ENCODE measurements at regions of chr11 and their contacts with region 1.

Region 1: DNA sequence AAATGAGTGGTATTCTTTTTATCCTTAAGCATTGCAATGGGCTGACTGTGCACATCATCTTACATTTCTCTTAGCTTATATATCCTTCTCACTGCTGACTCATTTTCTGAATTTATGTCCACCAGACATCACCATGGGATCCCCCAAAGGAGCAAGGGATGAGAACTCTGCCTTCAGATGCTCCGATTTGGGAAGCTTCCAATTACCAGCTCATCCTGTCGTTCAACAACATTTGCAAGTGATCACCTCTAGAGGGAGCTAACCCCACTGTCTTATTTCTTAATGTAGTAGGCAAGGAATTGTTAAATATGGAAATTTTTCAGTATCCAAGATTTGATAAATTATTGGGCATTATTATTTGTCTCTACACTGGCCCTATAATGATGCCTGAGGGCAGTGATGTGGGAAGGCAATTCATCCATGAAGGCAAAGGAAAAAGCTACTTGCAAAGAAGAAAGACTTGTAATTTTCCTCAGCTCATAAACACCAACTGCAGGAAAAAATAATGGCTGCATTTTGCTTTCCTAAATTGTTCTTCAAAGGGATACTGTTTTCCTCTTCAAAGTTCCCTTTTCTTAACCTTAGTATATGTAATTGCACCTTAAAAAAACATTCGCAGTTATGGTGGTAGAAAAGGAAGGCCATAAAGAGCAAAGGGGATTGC is 102.4 kb upstream of the FSHB start:
- DNase-seq: no peak
- ATAC-seq: peak; percentile 75
- H3K4me3 Mint-ChIP-seq: no peak overlapping the region
- H3K27ac Mint-ChIP-seq: no peak overlapping the region
- H3K4me1 Mint-ChIP-seq: no peaks in the 10 kb centered on the region
- H3K27me3 Mint-ChIP-seq: peaks cover 30% of the 10 kb centered on the region
- CTCF ChIP-seq: peak; percentile 56

Region 2: DNA sequence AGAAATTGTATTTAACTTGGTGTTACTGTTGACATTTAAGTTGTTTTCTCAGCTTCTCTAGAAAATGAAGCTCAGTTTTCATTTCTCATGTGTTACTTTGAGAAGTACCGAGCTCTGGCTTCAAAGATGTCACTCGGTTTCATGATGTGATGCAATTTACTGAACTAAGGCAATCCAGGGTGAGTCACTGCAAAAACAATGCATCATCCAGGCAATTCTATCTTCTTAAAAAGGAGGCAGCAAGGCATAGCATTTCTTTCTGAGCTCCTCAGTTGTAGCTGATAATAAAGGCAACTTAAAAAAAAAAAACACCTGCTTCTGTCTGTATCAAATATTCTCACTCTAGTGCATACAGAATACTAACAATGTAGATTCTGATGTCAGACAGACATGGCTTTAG is 20.5 kb before region 1 on chr11:
- CTCF ChIA-PET with region 1: interaction called, 13 read pairs
- POLR2A ChIA-PET with region 1: no interaction called
- DNase-seq: no peak
- ATAC-seq: no peak
- H3K4me3 Mint-ChIP-seq: no peak overlapping the region
- H3K27ac Mint-ChIP-seq: no peak overlapping the region
- H3K4me1 Mint-ChIP-seq: 0 out of 2 replicates have a peak, but pooled peaks cover 6% of the 10 kb centered on the region
- H3K27me3 Mint-ChIP-seq: peaks cover 75% of the 10 kb centered on the region
- CTCF ChIP-seq: no peak

Region 3: DNA sequence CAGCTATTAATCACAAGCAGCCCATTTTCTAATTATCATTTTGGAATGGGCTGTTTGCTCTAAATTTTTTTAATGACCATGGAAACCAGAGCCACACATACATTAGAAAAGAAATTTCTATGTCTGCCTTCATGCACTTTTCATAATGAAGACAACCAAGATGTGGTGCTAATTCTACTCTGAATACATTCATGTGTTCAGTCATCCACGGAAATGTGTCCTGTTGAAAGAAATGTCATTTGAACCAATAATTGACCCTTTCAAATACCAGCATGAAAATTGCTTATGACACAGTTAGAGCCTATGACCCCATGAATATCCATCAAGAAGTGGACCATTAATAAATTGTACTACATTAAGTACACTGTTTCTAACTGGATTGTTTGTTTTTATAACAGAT is 11.9 kb before region 1 on chr11:
- CTCF ChIA-PET with region 1: interaction called, 23 read pairs
- POLR2A ChIA-PET with region 1: no interaction called
- DNase-seq: no peak
- ATAC-seq: no peak
- H3K4me3 Mint-ChIP-seq: no peak overlapping the region
- H3K27ac Mint-ChIP-seq: no peak overlapping the region
- H3K4me1 Mint-ChIP-seq: 0 out of 2 replicates have a peak, but pooled peaks cover 6% of the 10 kb centered on the region
- H3K27me3 Mint-ChIP-seq: peaks cover 84% of the 10 kb centered on the region
- CTCF ChIP-seq: no peak

Region 4: DNA sequence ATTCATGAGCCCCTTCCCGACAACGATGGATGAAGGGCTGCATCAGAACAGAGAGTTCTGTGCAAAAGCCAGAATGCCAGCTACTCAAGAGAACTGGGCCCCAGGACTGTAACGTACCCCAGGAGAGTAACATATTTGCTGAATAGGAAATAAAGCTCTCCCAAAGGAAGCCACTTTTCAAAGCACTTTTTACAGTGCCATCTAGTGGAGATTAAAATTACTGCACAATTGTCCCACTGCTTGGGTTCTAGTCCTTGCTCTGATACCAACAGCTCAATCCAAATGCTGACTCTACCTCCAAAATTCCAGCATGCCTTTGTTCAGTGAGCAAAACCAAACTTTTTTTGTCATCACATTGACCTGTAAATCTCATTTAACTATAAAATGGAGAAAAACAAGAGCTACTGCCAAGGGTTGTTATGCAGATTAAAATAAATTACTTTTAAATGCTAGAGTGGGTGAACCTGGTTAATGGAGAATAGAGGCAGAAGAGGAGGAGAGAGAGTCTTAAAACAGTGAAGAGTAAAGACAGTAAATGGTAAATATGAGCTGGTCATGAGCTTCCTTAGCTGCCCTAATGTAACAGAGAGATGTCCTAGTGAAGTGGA is 14.8 kb after region 1 on chr11:
- CTCF ChIA-PET with region 1: interaction called, 116 read pairs
- POLR2A ChIA-PET with region 1: interaction called, 3 read pairs
- DNase-seq: no peak
- ATAC-seq: peak; percentile 93
- H3K4me3 Mint-ChIP-seq: no peak overlapping the region
- H3K27ac Mint-ChIP-seq: no peak overlapping the region
- H3K4me1 Mint-ChIP-seq: no peaks in the 10 kb centered on the region
- H3K27me3 Mint-ChIP-seq: peaks cover 30% of the 10 kb centered on the region
- CTCF ChIP-seq: peak; percentile 58

Region 5: GRCh38 chr11:30150425-30150824 is 22.0 kb after region 1 on chr11:
- CTCF ChIA-PET with region 1: interaction called, 116 read pairs
- POLR2A ChIA-PET with region 1: no interaction called
- DNase-seq: no peak
- ATAC-seq: peak; percentile 32; the same call in 1 of the 2 replicates
- H3K4me3 Mint-ChIP-seq: no peak overlapping the region
- H3K27ac Mint-ChIP-seq: no peak overlapping the region
- H3K4me1 Mint-ChIP-seq: peaks cover 9% of the 10 kb centered on the region
- H3K27me3 Mint-ChIP-seq: peaks cover 45% of the 10 kb centered on the region
- CTCF ChIP-seq: no peak

Region 6: GRCh38 chr11:30196400-30197206 is 68.2 kb after region 1 on chr11:
- CTCF ChIA-PET with region 1: interaction called, 22 read pairs
- POLR2A ChIA-PET with region 1: no interaction called
- DNase-seq: peak; percentile 83
- ATAC-seq: peak; percentile 99
- H3K4me3 Mint-ChIP-seq: no peak overlapping the region
- H3K27ac Mint-ChIP-seq: no peak overlapping the region
- H3K4me1 Mint-ChIP-seq: no peaks in the 10 kb centered on the region
- H3K27me3 Mint-ChIP-seq: peaks cover 7% of the 10 kb centered on the region; the same call in 1 of the 2 replicates
- CTCF ChIP-seq: peak; percentile 33; the same call in 1 of the 2 replicates

Region 7: GRCh38 chr11:30244265-30244664 is 115.9 kb after region 1 on chr11:
- CTCF ChIA-PET with region 1: interaction called, 13 read pairs
- POLR2A ChIA-PET with region 1: no interaction called
- DNase-seq: no peak
- ATAC-seq: no peak
- H3K4me3 Mint-ChIP-seq: no peak overlapping the region
- H3K27ac Mint-ChIP-seq: no peak overlapping the region
- H3K4me1 Mint-ChIP-seq: no peaks in the 10 kb centered on the region
- H3K27me3 Mint-ChIP-seq: peaks cover 16% of the 10 kb centered on the region
- CTCF ChIP-seq: no peak

Measured in WTC11 (cell line).